ENCODE measurements at regions of chr10 and their contacts with region 1.

Region 1: DNA sequence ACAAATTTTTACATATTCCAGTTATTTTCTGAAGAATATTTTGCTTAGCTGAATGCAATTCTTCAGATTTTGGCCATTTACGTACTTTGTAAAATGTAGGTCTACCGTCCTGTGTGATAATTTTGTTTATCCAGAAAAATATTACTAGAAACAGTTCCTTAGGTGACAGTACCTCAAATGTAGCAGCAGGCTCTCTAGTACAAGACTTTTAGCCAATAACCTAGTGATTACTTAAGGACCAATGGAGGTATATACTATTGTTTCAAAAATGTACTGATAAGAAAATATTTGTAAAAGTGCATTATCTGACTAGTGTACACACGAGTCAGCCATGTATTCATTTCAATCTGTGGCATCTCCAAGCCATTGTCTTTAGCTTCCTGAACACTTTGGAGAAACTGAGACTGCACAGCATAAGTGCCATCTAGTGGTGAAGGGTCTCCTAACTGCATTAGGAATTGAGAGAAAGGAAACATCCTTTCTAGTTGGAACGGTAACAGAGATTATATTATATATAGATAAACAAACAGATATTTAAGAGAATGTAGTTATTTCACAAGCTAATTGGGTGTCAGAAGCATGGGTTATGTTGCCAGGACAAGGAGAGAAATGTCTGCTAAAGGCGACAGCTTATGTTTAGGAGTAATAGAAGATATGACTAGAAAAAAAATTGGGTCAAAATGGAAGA is 23.7 kb downstream of the RTKN2 start:
- DNase-seq: no peak
- H3K4me3 ChIP-seq: no peak overlapping the region; the same call in 1 of the 2 replicates
- H3K27me3 ChIP-seq: no peaks in the 10 kb centered on the region
- CTCF ChIP-seq: peak; percentile 86

Region 2: DNA sequence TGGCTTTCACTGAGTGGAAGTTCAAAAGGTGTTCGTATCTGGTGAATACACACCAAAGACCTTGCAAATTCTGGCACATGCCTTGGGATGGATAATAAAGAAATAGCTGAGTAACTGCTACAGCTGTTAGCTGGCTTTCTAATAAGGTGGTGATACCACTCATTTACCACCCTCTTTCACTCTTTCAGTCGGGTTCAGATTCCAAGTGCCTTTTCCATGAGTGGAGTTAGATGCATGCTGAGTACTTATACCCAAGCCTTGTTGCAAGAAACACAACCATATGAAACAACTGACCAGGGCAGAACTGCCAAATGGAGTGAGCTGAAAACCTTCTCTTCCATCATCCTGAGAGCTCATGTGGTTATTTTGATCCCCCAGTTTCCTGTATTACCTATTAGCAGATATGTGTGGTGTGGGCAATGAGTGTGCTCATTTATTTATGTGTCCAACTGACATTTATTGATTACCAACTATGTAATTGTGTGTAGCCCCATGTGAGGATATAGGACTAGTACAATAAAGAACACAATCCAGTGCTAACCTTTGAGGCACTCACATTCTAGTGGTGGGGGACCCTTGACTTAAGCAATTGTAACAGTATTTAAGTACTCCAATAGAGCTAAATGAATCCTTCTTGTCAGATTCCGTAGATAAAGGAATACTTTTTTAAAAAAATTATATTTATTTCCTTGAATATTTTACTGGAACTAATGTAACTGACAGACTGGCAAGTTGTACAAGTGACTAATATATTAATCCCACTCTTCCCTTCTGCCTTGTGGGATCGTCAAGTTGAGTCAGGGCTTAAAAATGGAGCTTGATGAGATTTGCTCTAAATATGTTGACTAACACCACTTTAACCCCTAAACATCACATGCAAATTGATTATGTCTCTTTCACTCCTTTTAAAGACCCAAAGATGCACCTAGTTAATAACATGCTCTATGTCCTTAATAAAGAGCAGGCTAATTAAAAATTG is 218.7 kb before region 1 on chr10:
- CTCF ChIA-PET with region 1: interaction called, 10 read pairs
- POLR2A ChIA-PET with region 1: no interaction called
- DNase-seq: no peak
- H3K4me3 ChIP-seq: no peak overlapping the region
- H3K27me3 ChIP-seq: no peaks in the 10 kb centered on the region
- CTCF ChIP-seq: no peak

Region 3: GRCh38 chr10:62050893-62051433 is 194.0 kb before region 1 on chr10:
- CTCF ChIA-PET with region 1: interaction called, 11 read pairs
- POLR2A ChIA-PET with region 1: interaction called, 4 read pairs
- DNase-seq: peak; percentile 72
- H3K4me3 ChIP-seq: peak overlapping the region; percentile 76
- H3K27me3 ChIP-seq: no peaks in the 10 kb centered on the region
- CTCF ChIP-seq: no peak

Region 4: DNA sequence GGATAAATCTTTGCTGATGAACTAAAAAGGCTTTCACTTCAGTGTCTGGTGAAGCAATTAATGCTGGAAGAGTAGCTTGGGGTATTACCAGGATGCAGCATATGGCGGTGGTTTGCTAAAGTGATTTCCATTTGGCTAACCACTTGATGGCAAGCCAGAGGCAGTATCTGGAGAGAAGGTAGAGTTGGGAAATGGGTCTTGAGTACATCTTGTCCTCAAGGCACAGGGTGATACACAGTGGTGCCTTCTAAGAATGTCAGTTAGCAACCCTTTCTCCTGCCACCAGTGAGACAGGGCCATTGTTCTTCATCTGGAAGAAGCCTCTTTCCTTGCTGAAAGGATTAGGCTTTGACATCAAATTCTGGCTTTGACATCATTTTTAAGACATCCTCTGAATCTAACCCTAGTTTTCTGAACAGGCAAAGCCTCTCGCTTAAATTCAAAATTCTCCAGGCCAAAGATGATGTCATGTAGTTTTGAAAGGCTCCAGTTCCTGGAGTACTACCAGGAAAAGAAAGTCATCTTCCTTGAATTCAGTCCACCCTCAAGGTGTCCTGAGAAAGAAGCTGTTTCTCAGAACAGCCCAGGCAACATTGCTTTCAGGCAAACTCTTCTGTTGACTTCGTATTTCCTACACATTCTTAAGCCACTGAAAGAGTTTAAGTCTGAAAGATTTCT is 181.0 kb before region 1 on chr10:
- CTCF ChIA-PET with region 1: interaction called, 26 read pairs
- POLR2A ChIA-PET with region 1: no interaction called
- DNase-seq: no peak
- H3K4me3 ChIP-seq: no peak overlapping the region
- H3K27me3 ChIP-seq: no peaks in the 10 kb centered on the region
- CTCF ChIP-seq: no peak

Region 5: DNA sequence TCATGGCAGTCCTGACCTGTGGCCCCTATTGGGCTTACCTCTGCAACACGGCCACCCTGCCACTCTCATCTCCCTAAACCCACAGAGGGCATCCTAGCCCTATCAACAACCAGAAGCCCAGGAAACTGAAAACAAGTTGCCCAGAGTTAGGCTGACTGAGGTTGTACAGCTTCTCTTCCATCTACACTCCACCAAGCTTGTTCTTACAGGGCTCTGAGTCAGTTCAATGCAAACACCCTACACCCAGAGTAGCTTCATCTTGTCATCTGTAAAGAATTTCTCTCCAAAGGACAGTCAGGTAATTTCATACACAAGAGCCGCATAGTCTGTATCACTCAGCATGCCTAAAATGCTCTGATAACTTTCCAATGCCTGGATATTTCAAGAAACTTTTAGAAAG is 168.0 kb before region 1 on chr10:
- CTCF ChIA-PET with region 1: interaction called, 10 read pairs
- POLR2A ChIA-PET with region 1: no interaction called
- DNase-seq: peak; percentile 52
- H3K4me3 ChIP-seq: no peak overlapping the region
- H3K27me3 ChIP-seq: no peaks in the 10 kb centered on the region
- CTCF ChIP-seq: no peak

Region 6: GRCh38 chr10:62183442-62183841 is 61.5 kb before region 1 on chr10:
- CTCF ChIA-PET with region 1: no interaction called
- POLR2A ChIA-PET with region 1: no interaction called
- DNase-seq: no peak
- H3K4me3 ChIP-seq: no peak overlapping the region
- H3K27me3 ChIP-seq: no peaks in the 10 kb centered on the region
- CTCF ChIP-seq: no peak